ENCODE measurements at regions of chr19 and their contacts with region 1.

Region 1: GRCh38 chr19:49363268-49364082 is at the start of gene DKKL1:
- DNase-seq: peak; percentile 100
- ATAC-seq: peak; percentile 88
- H3K4me3 Mint-ChIP-seq: no peak within 1 kb of the TSS
- H3K27ac Mint-ChIP-seq: no peak within 1 kb of the TSS
- H3K4me1 Mint-ChIP-seq: peaks cover 8% of the 10 kb centered on the region
- H3K27me3 Mint-ChIP-seq: peaks cover 5% of the 10 kb centered on the region
- CTCF ChIP-seq: no peak
- total RNA-seq, gene DKKL1: 2.4 to 3.0 TPM (median 2.9 TPM) in 3 replicates

Region 2: GRCh38 chr19:49327878-49328544 is 35.5 kb before region 1 on chr19:
- CTCF ChIA-PET with region 1: interaction called, 11 read pairs
- POLR2A ChIA-PET with region 1: interaction called, 3 read pairs
- DNase-seq: peak; percentile 62
- ATAC-seq: peak; percentile 79
- H3K4me3 Mint-ChIP-seq: no peak overlapping the region
- H3K27ac Mint-ChIP-seq: no peak overlapping the region
- H3K4me1 Mint-ChIP-seq: peaks cover 2% of the 10 kb centered on the region; the same call in 1 of the 2 replicates
- H3K27me3 Mint-ChIP-seq: peaks cover 22% of the 10 kb centered on the region
- CTCF ChIP-seq: peak; percentile 67

Region 3: DNA sequence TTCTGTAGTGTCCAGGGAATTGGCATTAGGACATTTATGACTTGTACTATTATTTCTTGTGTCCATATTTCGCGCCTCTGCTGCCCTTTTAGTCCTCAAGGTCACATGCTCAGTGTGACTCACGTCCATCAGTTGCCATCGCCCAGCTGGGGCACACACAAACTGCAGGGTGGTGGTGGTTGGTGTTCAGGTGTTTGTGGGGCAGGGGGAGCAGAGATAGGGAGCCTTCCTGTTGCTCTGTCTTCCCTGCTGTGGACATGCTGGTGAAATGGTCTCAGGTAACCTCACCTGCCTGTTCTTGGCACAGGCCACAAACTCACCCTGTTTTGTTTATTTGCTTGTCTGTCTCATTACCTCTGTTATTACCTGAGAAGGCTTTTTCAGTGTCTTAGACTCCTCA is 249.9 kb after region 1 on chr19:
- CTCF ChIA-PET with region 1: no interaction called
- POLR2A ChIA-PET with region 1: no interaction called
- DNase-seq: no peak
- ATAC-seq: no peak
- H3K4me3 Mint-ChIP-seq: no peak overlapping the region
- H3K27ac Mint-ChIP-seq: no peak overlapping the region
- H3K4me1 Mint-ChIP-seq: no peaks in the 10 kb centered on the region
- H3K27me3 Mint-ChIP-seq: no peaks in the 10 kb centered on the region
- CTCF ChIP-seq: no peak

Measured in WTC11 (cell line).